Sigmoid colon (tissue), 7 donors: ENCODE measurements at regions of chr10 and their contacts with region 1.

Region 1: DNA sequence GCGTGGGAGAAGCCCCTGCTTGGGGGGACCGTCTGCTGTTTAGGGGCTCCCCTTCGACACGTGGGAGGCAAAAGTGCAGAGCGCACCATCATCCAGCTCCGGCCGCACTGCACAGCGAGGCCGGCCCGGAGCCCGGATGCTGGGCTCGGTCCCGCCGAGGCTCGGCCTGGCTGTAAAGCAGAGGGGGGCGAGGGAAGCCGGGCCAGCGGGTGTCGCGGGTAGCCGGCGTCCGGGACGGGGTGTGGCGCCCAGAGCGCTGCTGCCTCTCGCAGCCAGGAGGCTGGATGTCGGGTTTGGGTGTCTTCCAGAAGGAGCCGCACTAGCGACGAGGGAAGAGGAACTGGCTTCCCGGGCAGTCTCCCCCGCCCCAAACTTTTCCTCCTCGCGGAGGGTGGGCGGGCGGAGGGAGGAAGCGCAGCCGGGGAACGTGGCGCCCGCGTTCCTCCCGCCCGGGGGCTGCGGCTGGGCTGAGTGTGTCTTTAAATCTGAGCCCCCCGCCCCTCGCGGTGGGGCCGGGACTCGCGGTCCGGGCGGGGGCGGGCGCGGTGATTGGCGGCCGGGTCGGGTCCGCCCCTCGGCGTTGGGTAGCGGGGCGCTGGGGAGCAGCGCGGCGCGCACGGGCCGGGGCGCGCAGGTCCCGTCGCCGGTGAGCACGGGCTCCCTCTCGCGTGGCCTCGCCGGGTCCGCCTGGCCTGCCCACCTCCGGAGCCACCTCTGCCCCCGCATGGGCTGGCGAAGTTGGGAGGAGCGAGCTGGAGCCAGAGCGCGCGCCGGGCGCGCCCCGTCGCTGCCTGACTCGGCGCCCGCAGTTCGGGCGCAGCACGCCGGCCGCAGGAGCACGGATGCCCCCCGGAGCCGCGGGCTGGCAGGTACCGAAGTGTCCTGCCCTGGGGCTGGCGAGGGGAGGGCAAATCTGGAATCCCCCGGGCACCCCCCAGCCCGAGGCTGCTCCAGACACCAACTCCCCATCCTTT is at the start of gene PALD1:
- DNase-seq: peak; percentile 91
- H3K4me3 ChIP-seq: peak within 1 kb of the TSS; percentile 57 to 81 (median 75)
- H3K27ac ChIP-seq: peak within 1 kb of the TSS; percentile 77 to 90 (median 81)
- H3K4me1 ChIP-seq: peaks cover 0 to 61% (median 54%) of the 10 kb centered on the region in 4 donors
- H3K27me3 ChIP-seq: no peaks in the 10 kb centered on the region
- CTCF ChIP-seq: peak; percentile 22 to 44 (median 24)
- EP300 ChIP-seq: no peak
- POLR2A ChIP-seq: peak in 1 of 2 donors; percentile 20
- total RNA-seq, gene PALD1: 13.9 to 33.8 (median 18.8) TPM

Region 2: DNA sequence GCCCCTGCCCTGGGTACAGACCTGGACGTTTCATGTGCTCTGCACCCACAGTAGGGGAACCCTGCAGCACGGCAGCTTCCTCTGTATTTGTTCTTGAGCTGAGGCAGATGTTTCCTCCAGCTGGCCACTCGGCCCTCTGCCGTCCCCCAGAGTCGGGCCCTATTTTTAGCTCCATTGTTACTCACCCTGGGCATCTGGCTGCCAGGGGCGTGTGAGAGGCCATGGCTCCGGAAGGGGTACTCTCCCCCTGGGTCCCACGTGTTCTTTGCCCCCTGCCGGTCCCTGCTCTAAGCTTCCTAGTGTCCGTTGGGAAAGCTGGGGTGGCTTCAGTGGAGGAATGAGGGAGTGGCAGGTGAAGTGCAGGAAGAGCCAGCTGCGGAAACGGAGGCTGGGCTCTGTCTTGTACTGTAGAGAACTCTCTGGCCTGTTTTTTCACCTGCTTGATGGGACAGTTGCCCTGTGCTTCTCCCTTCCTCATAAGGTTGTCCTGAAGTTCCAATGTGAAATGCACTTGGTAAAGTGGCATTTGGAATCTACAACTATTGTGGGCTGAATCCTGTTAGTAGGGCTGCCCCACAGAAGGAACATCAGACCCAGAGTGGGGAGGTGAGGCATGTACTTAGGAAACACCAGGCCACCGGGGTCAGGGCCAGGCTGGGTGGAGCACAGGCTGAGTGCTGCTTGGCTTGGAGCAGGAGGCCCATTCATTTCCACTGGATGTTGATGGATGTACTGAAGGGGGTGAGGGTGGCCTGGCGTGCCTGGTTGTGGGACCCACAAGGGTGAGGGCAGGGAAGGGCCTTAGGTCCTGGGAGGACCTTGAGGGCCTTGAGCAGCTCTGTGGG is 30.7 kb after region 1 on chr10:
- intact Hi-C with region 1: loop called (anchors 2 kb)
- DNase-seq: peak; percentile 84
- H3K4me3 ChIP-seq: peak overlapping the region in 1 of 4 donors; percentile 2
- H3K27ac ChIP-seq: peak overlapping the region; percentile 41 to 73 (median 62)
- H3K4me1 ChIP-seq: peaks cover 0 to 54% (median 49%) of the 10 kb centered on the region in 4 donors
- H3K27me3 ChIP-seq: no peaks in the 10 kb centered on the region
- CTCF ChIP-seq: no peak
- EP300 ChIP-seq: no peak
- POLR2A ChIP-seq: no peak

Region 3: GRCh38 chr10:70656489-70656888 is 178.0 kb after region 1 on chr10:
- intact Hi-C with region 1: no loop called
- DNase-seq: peak; percentile 27
- H3K4me3 ChIP-seq: no peak overlapping the region
- H3K27ac ChIP-seq: no peak overlapping the region
- H3K4me1 ChIP-seq: no peaks in the 10 kb centered on the region
- H3K27me3 ChIP-seq: no peaks in the 10 kb centered on the region
- CTCF ChIP-seq: no peak
- EP300 ChIP-seq: no peak
- POLR2A ChIP-seq: no peak